Activated CD4-positive, alpha-beta T cell treated with anti-CD3 and anti-CD28 coated beads for 36 hours (primary cell): ENCODE measurements at regions of chr14 and their contacts with region 1.

Region 1: GRCh38 chr14:94380225-94381148 is 7.9 kb downstream of the SERPINA1 start:
- DNase-seq: peak; percentile 60
- ATAC-seq: peak; percentile 37
- H3K4me3 Mint-ChIP-seq: no peak overlapping the region
- H3K27ac Mint-ChIP-seq: peak overlapping the region; percentile 87
- H3K4me1 Mint-ChIP-seq: peaks cover 40% of the 10 kb centered on the region
- H3K27me3 Mint-ChIP-seq: no peaks in the 10 kb centered on the region

Region 2: DNA sequence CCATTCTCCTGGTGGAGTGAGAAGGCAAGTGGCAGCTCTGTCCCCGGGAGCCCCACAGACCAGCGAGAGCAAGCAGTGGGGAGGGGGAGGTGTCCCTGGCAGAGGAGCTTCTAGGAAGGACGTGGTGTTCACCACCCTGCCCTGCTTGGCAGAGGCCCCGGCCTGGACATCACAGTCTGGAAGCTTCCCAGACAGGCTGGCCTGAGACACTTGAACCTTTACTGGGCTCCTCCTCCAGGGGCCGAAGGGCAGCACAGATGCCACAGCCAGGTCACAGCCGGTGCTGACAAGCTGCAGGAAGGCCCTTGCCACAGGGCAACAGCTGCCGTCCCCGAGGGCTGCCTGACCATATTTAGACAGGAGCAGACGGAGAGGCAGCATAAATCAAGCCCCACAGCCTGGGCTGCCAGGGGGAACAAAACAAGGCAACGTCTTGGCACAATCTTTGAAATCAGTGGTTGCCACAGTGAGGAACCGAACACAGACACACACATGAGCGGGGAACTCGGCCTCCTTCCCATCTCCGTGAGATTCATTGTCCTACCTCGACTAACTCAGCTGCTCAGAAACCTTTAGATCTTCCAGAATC is 620.7 kb before region 1 on chr14:
- CTCF ChIA-PET with region 1: no interaction called
- POLR2A ChIA-PET with region 1: no interaction called
- intact Hi-C with region 1: no loop called
- DNase-seq: no peak
- ATAC-seq: no peak
- H3K4me3 Mint-ChIP-seq: no peak overlapping the region
- H3K27ac Mint-ChIP-seq: no peak overlapping the region
- H3K4me1 Mint-ChIP-seq: no peaks in the 10 kb centered on the region
- H3K27me3 Mint-ChIP-seq: peaks cover 16% of the 10 kb centered on the region

Region 3: GRCh38 chr14:93923626-93924025 is 456.9 kb before region 1 on chr14:
- CTCF ChIA-PET with region 1: no interaction called
- POLR2A ChIA-PET with region 1: no interaction called
- intact Hi-C with region 1: no loop called
- DNase-seq: no peak
- ATAC-seq: no peak
- H3K4me3 Mint-ChIP-seq: no peak overlapping the region
- H3K27ac Mint-ChIP-seq: no peak overlapping the region
- H3K4me1 Mint-ChIP-seq: no peaks in the 10 kb centered on the region
- H3K27me3 Mint-ChIP-seq: no peaks in the 10 kb centered on the region

Region 4: GRCh38 chr14:94342334-94342934 is 38.1 kb before region 1 on chr14:
- CTCF ChIA-PET with region 1: no interaction called
- POLR2A ChIA-PET with region 1: interaction called, 11 read pairs
- intact Hi-C with region 1: no loop called
- DNase-seq: peak; percentile 77
- ATAC-seq: peak; percentile 71
- H3K4me3 Mint-ChIP-seq: no peak overlapping the region
- H3K27ac Mint-ChIP-seq: peak overlapping the region; percentile 93
- H3K4me1 Mint-ChIP-seq: peaks cover 79% of the 10 kb centered on the region
- H3K27me3 Mint-ChIP-seq: peaks cover 2% of the 10 kb centered on the region

Region 5: GRCh38 chr14:94364037-94364436 is 16.4 kb before region 1 on chr14:
- CTCF ChIA-PET with region 1: interaction called, 3 read pairs
- POLR2A ChIA-PET with region 1: no interaction called
- intact Hi-C with region 1: loop called in 1 of 2 experiments (anchors 1 kb)
- DNase-seq: no peak
- ATAC-seq: no peak
- H3K4me3 Mint-ChIP-seq: no peak overlapping the region
- H3K27ac Mint-ChIP-seq: no peak overlapping the region
- H3K4me1 Mint-ChIP-seq: no peaks in the 10 kb centered on the region
- H3K27me3 Mint-ChIP-seq: peaks cover 5% of the 10 kb centered on the region

Region 6: GRCh38 chr14:94697773-94698556 is 317.5 kb after region 1 on chr14:
- CTCF ChIA-PET with region 1: no interaction called
- POLR2A ChIA-PET with region 1: no interaction called
- intact Hi-C with region 1: no loop called
- DNase-seq: no peak
- ATAC-seq: no peak
- H3K4me3 Mint-ChIP-seq: no peak overlapping the region
- H3K27ac Mint-ChIP-seq: no peak overlapping the region
- H3K4me1 Mint-ChIP-seq: no peaks in the 10 kb centered on the region
- H3K27me3 Mint-ChIP-seq: peaks cover 5% of the 10 kb centered on the region